ENCODE measurements at regions of chr19 and their contacts with region 1.

Region 1: DNA sequence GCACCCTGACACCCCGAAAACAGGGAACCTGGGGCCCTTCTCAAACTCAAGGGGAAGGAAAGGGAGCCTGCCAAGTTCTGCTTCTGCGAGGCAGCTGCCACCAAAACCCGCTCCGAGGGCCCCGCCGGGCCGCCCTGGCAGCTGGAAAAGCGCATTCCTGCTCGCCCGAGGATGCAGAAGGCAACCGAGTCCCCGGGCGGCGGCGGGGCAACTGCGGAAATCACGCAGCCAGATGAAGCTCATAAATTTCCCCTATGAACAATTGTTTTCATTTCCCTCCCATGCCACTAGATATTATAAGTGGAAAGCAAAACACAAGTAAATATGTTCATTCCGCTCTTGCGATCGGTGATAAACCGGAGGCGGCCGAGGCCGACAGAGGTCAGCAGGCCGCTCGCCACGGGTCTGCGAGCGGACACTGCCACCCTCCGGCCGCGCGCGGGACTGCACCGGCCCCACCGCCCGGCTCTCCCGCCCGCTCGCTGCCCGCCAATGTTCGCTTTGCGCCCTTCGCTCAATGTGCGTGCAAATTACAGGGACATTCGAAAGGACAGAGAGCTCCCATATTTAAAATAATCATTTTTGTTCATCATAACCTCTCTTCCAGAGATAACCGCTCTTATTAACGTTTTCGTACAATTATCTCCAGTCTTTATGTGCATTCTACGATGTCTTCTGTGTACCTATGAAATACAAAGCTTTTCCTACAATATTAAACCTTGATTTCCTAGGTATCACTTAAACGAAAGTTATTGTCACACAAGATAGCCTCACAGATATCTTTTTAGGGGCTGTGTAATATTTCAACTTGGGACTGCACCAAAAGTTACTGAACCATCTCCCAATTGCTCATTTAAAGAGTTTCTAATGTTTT is 120.8 kb upstream of the ZNF507 start:
- DNase-seq: peak; percentile 64 to 85 (median 85)
- ATAC-seq: peak; percentile 84 to 92
- H3K4me3 ChIP-seq: peak overlapping the region; percentile 11
- H3K27ac ChIP-seq: no peak overlapping the region
- H3K4me1 ChIP-seq: no peaks in the 10 kb centered on the region
- H3K27me3 ChIP-seq: no peaks in the 10 kb centered on the region

Region 2: GRCh38 chr19:30669329-30670010 is 1555.1 kb before region 1 on chr19:
- intact Hi-C with region 1: loop called in 1 of 4 experiments (anchors 10 kb)
- DNase-seq: peak; percentile 65 to 90 (median 87)
- ATAC-seq: peak; percentile 21 to 40
- H3K4me3 ChIP-seq: no peak overlapping the region
- H3K27ac ChIP-seq: no peak overlapping the region
- H3K4me1 ChIP-seq: peaks cover 3% of the 10 kb centered on the region
- H3K27me3 ChIP-seq: no peaks in the 10 kb centered on the region

Region 3: GRCh38 chr19:32061281-32061680 is 163.3 kb before region 1 on chr19:
- intact Hi-C with region 1: no loop called
- DNase-seq: no peak
- ATAC-seq: no peak
- H3K4me3 ChIP-seq: no peak overlapping the region
- H3K27ac ChIP-seq: no peak overlapping the region
- H3K4me1 ChIP-seq: no peaks in the 10 kb centered on the region
- H3K27me3 ChIP-seq: no peaks in the 10 kb centered on the region

Region 4: DNA sequence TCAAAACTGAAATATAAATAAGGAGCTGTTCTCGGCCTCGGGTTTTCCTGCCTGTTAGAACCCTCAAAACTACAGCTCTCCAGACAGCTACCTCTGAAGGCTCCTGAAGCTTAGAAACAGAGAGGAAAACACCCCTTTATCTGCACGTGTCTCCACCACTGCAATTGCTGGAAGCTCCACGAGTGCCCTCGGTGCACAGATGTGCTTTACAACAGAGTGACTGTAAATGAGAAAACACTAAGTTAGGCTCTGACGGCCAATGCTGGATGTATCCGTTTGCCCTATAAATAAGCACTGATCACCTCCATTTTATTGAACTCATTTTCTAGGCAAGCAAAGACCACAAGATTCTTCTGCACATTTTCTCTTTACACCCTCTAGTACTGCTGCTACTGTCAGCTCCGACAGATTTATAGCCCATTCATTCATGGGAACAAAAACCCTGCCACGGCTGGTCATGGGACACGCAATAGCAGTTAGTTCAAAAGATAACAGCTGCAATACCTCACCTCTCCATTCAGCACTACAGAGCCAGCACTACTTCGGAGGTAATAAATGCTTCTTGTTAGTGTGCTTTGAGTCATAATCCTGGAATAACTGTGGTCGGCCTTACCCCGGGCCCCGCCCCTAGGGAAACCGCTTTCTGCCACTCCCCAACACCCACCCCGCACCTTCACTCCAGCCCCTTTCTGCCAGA is 120.3 kb before region 1 on chr19:
- intact Hi-C with region 1: no loop called
- DNase-seq: no peak
- ATAC-seq: no peak
- H3K4me3 ChIP-seq: no peak overlapping the region
- H3K27ac ChIP-seq: no peak overlapping the region
- H3K4me1 ChIP-seq: no peaks in the 10 kb centered on the region
- H3K27me3 ChIP-seq: no peaks in the 10 kb centered on the region